ENCODE measurements at regions of chr9 and their contacts with region 1.

Region 1: DNA sequence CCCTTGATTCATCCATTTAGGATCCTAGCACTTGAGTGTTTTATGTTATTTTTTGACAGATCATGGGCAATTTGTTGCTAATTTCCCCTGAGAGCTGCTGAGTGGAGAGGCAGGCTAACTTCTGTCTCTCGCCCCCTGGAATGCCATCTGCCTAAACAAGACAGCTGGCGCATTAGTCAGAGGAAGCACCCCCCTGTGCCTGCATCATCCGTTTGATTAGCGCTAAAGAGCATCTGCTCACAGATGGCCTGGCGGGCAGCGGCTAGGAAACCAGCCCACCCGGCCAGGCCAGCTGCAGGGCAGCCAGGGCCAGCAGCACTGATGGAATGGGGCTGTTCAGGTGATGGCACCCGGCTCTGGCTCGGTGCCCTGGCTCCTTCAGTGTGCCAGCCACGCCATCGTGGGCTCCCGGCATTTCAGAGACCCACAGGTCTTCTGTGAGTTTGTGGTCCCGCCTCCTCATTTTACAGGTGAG is 22.9 kb upstream of the ASS1 start:
- DNase-seq: peak; percentile 59
- H3K4me3 ChIP-seq: no peak overlapping the region
- CTCF ChIP-seq: no peak

Region 2: DNA sequence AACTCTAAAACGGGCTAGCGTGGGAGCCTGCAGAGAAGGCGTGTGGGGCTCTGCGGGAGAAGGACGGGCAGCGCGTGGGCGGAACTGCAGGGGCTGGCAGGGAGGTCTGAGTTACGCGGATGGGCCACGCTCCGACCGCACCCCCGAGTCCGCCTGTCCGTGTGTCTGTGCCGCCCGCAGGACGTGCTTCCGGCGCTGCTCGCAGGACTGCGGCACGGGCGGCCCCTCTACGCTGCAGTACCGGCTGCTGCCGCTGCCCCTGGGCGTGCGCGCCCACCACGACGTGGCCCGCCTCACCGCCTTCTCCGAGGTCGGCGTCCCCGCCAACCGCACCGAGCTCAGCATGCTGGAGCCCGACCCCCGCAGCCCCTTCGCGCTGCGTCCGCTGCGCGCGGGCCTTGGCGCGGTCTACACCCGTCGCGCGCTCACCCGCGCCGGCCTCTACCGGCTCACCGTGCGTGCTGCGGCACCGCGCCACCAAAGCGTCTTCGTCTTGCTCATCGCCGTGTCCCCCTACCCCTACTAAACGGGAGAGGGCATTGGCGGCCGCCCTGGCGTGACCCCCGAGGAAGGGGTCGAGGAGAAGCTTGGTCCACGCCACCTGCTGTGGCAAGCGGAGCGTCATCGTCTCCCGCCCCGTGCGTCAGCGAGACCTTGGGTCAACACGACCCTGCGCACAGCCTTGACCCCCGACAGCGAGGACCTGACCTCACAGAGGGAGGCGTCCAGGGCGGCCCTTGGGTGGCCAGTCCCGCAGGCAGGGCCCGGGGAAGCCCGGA is 11.5 kb after region 1 on chr9:
- CTCF ChIA-PET with region 1: interaction called, 13 read pairs
- POLR2A ChIA-PET with region 1: no interaction called
- DNase-seq: no peak
- H3K4me3 ChIP-seq: peak overlapping the region; percentile 41
- CTCF ChIP-seq: peak; percentile 78

Measured in AG04449 (cell line).